ENCODE measurements at regions of chr6 and their contacts with region 1.

Region 1: GRCh38 chr6:6635869-6636268 is 47.3 kb downstream of the LY86 start:
- DNase-seq: no peak
- H3K4me3 ChIP-seq: no peak overlapping the region
- H3K27ac ChIP-seq: no peak overlapping the region
- H3K4me1 ChIP-seq: no peaks in the 10 kb centered on the region
- H3K27me3 ChIP-seq: no peaks in the 10 kb centered on the region
- CTCF ChIP-seq: no peak
- POLR2A ChIP-seq: no peak

Region 2: GRCh38 chr6:5764401-5764955 is 871.4 kb before region 1 on chr6:
- intact Hi-C with region 1: loop called (anchors 10 kb)
- DNase-seq: no peak
- H3K4me3 ChIP-seq: no peak overlapping the region
- H3K27ac ChIP-seq: no peak overlapping the region
- H3K4me1 ChIP-seq: no peaks in the 10 kb centered on the region
- H3K27me3 ChIP-seq: no peaks in the 10 kb centered on the region
- CTCF ChIP-seq: no peak
- POLR2A ChIP-seq: no peak

Region 3: GRCh38 chr6:6620766-6621425 is 15.0 kb before region 1 on chr6:
- intact Hi-C with region 1: loop called (anchors 1 kb)
- DNase-seq: no peak
- H3K4me3 ChIP-seq: no peak overlapping the region
- H3K27ac ChIP-seq: no peak overlapping the region
- H3K4me1 ChIP-seq: no peaks in the 10 kb centered on the region
- H3K27me3 ChIP-seq: no peaks in the 10 kb centered on the region
- CTCF ChIP-seq: no peak
- POLR2A ChIP-seq: no peak

Region 4: DNA sequence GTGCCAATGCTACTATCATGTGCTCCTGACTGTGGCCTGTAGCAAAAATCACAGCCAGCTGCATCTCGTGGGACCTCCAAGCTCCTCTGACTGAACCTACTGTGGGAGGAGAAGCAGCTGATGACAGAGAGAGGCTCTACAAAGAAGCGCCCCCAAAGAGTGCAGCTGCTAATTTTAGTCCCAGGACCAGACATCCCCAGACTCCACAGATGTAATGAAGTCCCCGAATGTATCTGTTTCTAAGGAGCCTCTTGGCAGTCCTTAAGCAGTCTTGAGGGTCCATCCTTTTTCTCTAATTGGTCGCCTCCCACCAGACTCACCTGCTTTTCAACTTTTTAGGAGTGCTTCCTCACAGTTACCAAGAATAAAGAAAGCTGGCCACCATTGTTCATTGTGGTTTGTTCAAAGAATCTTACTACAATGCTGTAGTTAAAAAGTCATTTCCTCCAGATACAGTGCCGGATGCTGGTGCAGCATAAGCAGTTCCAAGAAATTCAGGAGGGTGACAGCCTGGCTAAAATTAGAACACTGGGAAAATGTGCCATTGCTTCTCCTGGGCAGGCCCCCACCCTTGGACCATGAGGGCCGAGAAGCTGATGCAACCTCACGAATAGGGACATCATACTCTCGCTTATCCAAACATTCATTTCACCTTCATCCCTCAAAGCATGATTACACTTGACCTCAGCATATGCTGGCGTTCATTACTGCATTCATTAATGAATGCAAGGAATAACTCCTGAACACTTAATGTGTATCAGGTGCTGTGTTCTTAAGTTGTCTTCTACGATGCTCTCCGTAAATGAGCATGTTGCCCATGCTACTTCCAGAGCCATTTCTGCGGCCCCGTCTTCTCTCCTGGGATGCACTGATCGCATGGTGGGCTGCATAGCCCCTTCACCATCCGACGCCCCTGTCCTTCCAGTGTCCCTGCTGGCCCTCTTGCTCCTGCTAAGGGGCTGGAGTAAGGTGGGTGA is 19.0 kb after region 1 on chr6:
- intact Hi-C with region 1: no loop called
- DNase-seq: no peak
- H3K4me3 ChIP-seq: no peak overlapping the region
- H3K27ac ChIP-seq: peak overlapping the region in 1 of 2 donors; percentile 54
- H3K4me1 ChIP-seq: no peaks in the 10 kb centered on the region
- H3K27me3 ChIP-seq: no peaks in the 10 kb centered on the region
- CTCF ChIP-seq: no peak
- POLR2A ChIP-seq: no peak

Measured in breast epithelium (tissue), 4 donors.